AG04450 (cell line): ENCODE measurements at regions of chr10 and their contacts with region 1.

Region 1: GRCh38 chr10:77710759-77711682 is 73.4 kb upstream of the KCNMA1 start:
- DNase-seq: no peak
- H3K4me3 ChIP-seq: peak overlapping the region; percentile 59
- H3K27ac ChIP-seq: no peak overlapping the region
- H3K27me3 ChIP-seq: peaks cover 7% of the 10 kb centered on the region
- CTCF ChIP-seq: peak; percentile 95

Region 2: DNA sequence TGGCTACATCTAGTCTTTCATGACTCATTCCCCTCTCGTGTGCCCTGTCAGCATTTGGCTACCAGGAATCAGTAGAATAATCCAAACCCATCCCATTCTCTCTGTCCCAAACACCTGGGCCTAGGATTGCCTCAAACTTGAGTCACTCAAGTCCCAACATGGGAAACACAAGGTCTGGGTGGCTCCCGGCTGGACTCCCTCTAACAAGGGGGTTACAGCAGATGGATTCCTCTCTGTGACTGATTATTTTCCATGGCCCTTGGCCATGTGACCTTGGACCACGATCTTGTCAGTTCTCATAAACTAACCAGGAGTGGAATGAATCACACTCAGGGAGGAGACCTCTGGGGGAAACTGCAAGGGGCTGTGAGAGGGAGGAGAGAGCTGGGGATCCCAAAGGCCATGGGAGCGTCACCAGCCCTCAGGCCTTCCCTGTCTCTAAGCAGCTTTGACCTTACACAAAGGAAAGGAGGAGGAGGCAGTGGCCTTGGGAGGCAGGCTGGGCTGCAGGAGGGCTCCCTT is 606.5 kb before region 1 on chr10:
- CTCF ChIA-PET with region 1: no interaction called
- POLR2A ChIA-PET with region 1: no interaction called
- DNase-seq: peak; percentile 86
- H3K4me3 ChIP-seq: no peak overlapping the region
- H3K27ac ChIP-seq: peak overlapping the region; percentile 70
- H3K27me3 ChIP-seq: no peaks in the 10 kb centered on the region
- CTCF ChIP-seq: no peak

Region 3: GRCh38 chr10:77230194-77230593 is 480.8 kb before region 1 on chr10:
- CTCF ChIA-PET with region 1: no interaction called
- POLR2A ChIA-PET with region 1: no interaction called
- DNase-seq: peak; percentile 18
- H3K4me3 ChIP-seq: no peak overlapping the region
- H3K27ac ChIP-seq: no peak overlapping the region
- H3K27me3 ChIP-seq: no peaks in the 10 kb centered on the region
- CTCF ChIP-seq: no peak

Region 4: DNA sequence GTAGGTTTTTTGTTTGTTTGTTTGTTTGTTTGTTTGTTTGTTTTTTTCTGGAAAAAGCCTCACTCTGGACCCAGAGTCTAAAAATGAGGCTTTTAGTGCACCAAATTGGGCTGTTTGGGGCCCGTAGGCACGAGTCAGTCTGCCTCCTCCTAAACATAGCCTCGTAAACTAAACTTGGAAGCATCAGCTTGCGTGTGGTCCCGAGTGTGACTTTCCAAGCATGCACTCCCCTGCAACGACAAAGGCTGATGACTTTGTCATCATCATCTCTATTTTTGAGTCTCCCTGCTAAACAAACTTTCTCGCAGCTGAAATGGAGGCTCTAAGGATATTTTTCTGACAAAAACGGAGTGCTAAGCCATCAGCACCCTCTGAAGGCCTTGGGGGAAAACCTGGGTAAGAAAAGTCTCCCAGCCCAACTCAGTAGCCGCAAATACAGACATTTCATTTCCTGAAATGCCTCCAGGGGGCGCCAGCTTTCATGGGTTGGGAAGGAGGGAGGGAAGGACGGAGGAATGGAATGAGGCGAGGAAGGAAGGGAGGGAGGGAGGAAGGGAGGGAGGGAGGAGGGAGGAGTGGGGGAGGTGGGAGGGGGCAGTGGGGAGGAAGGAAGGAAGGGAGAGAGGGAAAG is 319.3 kb before region 1 on chr10:
- CTCF ChIA-PET with region 1: interaction called, 20 read pairs
- POLR2A ChIA-PET with region 1: interaction called, 3 read pairs
- DNase-seq: peak; percentile 73
- H3K4me3 ChIP-seq: no peak overlapping the region
- H3K27ac ChIP-seq: peak overlapping the region; percentile 78
- H3K27me3 ChIP-seq: no peaks in the 10 kb centered on the region
- CTCF ChIP-seq: peak; percentile 79

Region 5: GRCh38 chr10:77664008-77664407 is 47.0 kb before region 1 on chr10:
- CTCF ChIA-PET with region 1: interaction called, 10 read pairs
- POLR2A ChIA-PET with region 1: no interaction called
- DNase-seq: no peak
- H3K4me3 ChIP-seq: no peak overlapping the region
- H3K27ac ChIP-seq: no peak overlapping the region
- H3K27me3 ChIP-seq: peaks cover 20% of the 10 kb centered on the region
- CTCF ChIP-seq: no peak

Region 6: GRCh38 chr10:77721815-77722214 is 10.8 kb after region 1 on chr10:
- CTCF ChIA-PET with region 1: interaction called, 23 read pairs
- POLR2A ChIA-PET with region 1: no interaction called
- DNase-seq: no peak
- H3K4me3 ChIP-seq: no peak overlapping the region
- H3K27ac ChIP-seq: no peak overlapping the region
- H3K27me3 ChIP-seq: no peaks in the 10 kb centered on the region
- CTCF ChIP-seq: no peak

Region 7: DNA sequence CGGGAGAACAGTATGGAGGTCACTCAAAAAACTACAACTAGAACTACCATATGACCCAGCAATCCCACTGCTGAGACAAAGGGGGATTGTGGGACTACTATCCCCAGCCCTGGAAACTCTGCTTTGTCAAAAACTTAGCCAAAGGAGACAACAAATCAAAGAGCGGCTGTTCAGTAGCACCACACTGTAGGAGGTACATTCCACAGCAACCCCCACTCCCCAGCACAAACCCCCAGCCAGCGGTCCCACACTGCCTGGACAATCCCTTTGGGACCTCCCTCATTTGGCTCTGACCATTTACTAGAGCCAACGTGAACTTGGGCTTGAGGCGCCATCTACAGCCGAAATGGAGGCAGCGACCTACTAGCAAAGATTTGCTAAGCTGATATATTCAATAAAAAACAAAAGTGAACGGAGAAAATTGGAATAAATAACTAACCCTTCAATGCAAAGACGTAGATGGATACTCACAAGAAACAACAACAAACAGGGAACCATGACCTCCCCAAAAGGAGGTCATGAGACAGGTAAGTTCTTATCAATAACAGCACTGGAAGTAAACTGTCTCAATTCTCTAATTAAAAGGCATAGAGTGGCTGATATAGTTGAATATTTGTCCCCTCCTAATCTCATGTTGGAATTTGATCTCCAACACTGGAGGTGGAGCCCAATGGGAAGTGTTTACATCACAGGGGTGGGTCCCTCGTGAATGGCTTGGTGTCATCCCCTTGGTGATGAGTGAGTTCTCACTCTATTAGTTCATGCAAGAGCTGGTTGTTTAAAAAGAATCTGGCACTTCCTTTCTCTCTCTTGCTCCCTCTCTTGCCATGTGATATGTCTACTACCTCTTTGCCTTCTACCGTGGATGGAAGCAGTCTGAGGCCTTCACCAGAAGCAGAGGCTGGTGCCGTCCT is 45.6 kb after region 1 on chr10:
- CTCF ChIA-PET with region 1: interaction called, 15 read pairs
- POLR2A ChIA-PET with region 1: no interaction called
- DNase-seq: peak; percentile 43
- H3K4me3 ChIP-seq: no peak overlapping the region
- H3K27ac ChIP-seq: no peak overlapping the region
- H3K27me3 ChIP-seq: no peaks in the 10 kb centered on the region
- CTCF ChIP-seq: peak; percentile 89